Ascending aorta (tissue), 2 donors: ENCODE measurements at regions of chr19 and their contacts with region 1.

Region 1: GRCh38 chr19:9796113-9796773 is 22.6 kb downstream of the FBXL12 start:
- DNase-seq: peak; percentile 51 to 91
- H3K4me3 ChIP-seq: no peak overlapping the region
- H3K27ac ChIP-seq: peak overlapping the region in 1 of 2 donors; percentile 19
- H3K4me1 ChIP-seq: no peaks in the 10 kb centered on the region
- H3K27me3 ChIP-seq: no peaks in the 10 kb centered on the region
- CTCF ChIP-seq: peak; percentile 70 to 90 (median 76)

Region 2: GRCh38 chr19:9205501-9206113 is 590.6 kb before region 1 on chr19:
- intact Hi-C with region 1: loop called (anchors 2 kb)
- DNase-seq: peak; percentile 16 to 78
- H3K4me3 ChIP-seq: peak overlapping the region; percentile 17 to 41
- H3K27ac ChIP-seq: no peak overlapping the region
- H3K4me1 ChIP-seq: no peaks in the 10 kb centered on the region
- H3K27me3 ChIP-seq: no peaks in the 10 kb centered on the region
- CTCF ChIP-seq: peak; percentile 71 to 94 (median 87)

Region 3: GRCh38 chr19:9323919-9324583 is 472.2 kb before region 1 on chr19 and contains the start of gene ZNF559:
- intact Hi-C with region 1: loop called (anchors 1 kb)
- DNase-seq: peak; percentile 70 to 96
- H3K4me3 ChIP-seq: peak within 1 kb of the TSS; percentile 72 to 76
- H3K27ac ChIP-seq: peak within 1 kb of the TSS; percentile 87 to 90
- H3K4me1 ChIP-seq: peaks cover 0 to 7% of the 10 kb centered on the region in 2 donors
- H3K27me3 ChIP-seq: no peaks in the 10 kb centered on the region
- CTCF ChIP-seq: peak in 2 of 3 experiments; percentile 22 to 29
- total RNA-seq, gene ZNF559: 1.5 TPM

Region 4: GRCh38 chr19:9538183-9539058 is 257.8 kb before region 1 on chr19 and contains the start of gene ZNF426:
- intact Hi-C with region 1: loop called (anchors 5 kb)
- DNase-seq: peak; percentile 37 to 89
- H3K4me3 ChIP-seq: peak within 1 kb of the TSS; percentile 79 to 80
- H3K27ac ChIP-seq: peak within 1 kb of the TSS; percentile 89 to 90
- H3K4me1 ChIP-seq: peaks cover 0 to 8% of the 10 kb centered on the region in 2 donors
- H3K27me3 ChIP-seq: no peaks in the 10 kb centered on the region
- CTCF ChIP-seq: no peak
- total RNA-seq, gene ZNF426: 24.6 TPM

Region 5: DNA sequence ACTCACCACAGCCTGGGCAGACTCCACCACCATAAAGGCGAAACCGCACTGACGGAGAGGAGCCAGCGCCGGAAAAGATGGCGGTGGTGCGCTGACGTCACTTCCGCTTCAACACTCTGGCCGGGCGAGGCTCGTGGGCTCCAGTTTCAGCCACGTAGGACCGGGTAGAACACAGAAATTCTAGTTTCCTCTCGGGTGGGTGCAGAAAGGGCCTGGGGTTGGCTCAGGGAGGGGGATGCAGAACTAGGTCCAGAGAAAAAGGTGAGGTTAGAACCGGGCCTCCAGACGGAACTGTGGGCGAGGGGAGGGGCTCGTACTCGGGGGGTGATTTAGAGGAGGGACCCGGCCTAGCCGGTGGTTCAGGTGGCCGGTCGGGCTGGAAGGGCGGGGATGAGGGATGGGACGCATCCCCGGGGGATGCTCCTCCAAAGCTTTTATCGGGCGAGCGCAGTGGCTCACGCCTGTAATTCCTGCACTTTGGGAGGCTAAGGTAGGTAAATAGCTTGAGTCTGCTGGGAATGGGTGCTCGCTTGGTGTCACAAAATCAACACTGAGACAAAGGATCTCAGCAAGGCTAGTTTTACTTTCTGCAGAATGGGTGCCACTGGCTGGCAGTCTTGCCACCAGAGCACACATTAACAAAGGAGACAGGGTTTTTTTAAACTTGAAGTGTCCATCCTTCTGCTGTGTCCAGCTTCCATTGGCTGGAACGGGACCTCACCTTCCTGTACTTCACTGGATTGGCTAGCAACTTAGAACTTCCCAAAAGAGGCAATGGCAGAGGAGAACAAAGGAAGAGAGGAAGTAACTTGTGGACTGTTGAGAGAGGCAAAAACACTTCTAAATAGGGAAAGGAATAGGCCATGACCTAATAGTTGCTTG is 174.8 kb before region 1 on chr19 and contains the start of gene ZNF561:
- intact Hi-C with region 1: loop called (anchors 1 kb)
- DNase-seq: peak; percentile 14 to 90
- H3K4me3 ChIP-seq: peak within 1 kb of the TSS; percentile 83 to 87
- H3K27ac ChIP-seq: peak within 1 kb of the TSS; percentile 89 to 91
- H3K4me1 ChIP-seq: peaks cover 0 to 17% of the 10 kb centered on the region in 2 donors
- H3K27me3 ChIP-seq: no peaks in the 10 kb centered on the region
- CTCF ChIP-seq: no peak
- total RNA-seq, gene ZNF561: 35.4 TPM

Region 6: GRCh38 chr19:9818734-9819589 is 22.7 kb after region 1 on chr19 and contains the start of gene FBXL12:
- intact Hi-C with region 1: loop called (anchors 1 kb)
- DNase-seq: peak; percentile 100
- H3K4me3 ChIP-seq: peak within 1 kb of the TSS; percentile 69 to 86
- H3K27ac ChIP-seq: peak within 1 kb of the TSS; percentile 89 to 95
- H3K4me1 ChIP-seq: peaks cover 7 to 16% of the 10 kb centered on the region in 2 donors
- H3K27me3 ChIP-seq: no peaks in the 10 kb centered on the region
- CTCF ChIP-seq: no peak
- total RNA-seq, gene FBXL12: 64.4 TPM